HEK293 (cell line): ENCODE measurements at regions of chr16 and their contacts with region 1.

Region 1: GRCh38 chr16:84277237-84277823 is 17.3 kb upstream of the WFDC1 start:
- H3K4me3 ChIP-seq: no peak overlapping the region
- H3K27ac ChIP-seq: no peak overlapping the region
- H3K4me1 ChIP-seq: no peaks in the 10 kb centered on the region
- CTCF ChIP-seq: peak; percentile 62; the same call in 1 of the 2 replicates

Region 2: DNA sequence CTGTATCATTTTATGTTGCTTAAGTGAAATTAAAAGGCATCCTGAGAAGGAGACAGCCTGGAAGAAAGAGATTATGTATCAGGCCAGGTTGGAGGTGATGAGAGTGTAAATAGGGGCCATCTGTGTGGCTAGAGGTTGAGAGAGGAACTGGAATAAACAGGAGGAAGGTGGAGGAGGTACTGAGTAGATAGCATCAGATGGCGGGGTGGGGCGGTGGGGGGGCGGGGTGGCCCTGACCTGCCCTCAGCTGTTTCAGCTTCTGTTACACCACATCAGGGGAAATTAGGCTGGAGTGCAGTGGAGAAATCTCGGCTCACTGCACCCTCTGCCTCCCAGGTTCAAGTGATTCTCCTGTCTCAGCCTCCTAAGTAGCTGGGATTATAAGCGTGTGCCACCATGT is 30.6 kb before region 1 on chr16:
- CTCF ChIA-PET with region 1: interaction called, 11 read pairs
- POLR2A ChIA-PET with region 1: no interaction called
- H3K4me3 ChIP-seq: no peak overlapping the region
- H3K27ac ChIP-seq: no peak overlapping the region
- H3K4me1 ChIP-seq: no peaks in the 10 kb centered on the region
- CTCF ChIP-seq: no peak

Region 3: GRCh38 chr16:84260766-84261554 is 16.4 kb before region 1 on chr16:
- CTCF ChIA-PET with region 1: interaction called, 29 read pairs
- POLR2A ChIA-PET with region 1: no interaction called
- H3K4me3 ChIP-seq: no peak overlapping the region
- H3K27ac ChIP-seq: no peak overlapping the region
- H3K4me1 ChIP-seq: no peaks in the 10 kb centered on the region
- CTCF ChIP-seq: no peak

Region 4: DNA sequence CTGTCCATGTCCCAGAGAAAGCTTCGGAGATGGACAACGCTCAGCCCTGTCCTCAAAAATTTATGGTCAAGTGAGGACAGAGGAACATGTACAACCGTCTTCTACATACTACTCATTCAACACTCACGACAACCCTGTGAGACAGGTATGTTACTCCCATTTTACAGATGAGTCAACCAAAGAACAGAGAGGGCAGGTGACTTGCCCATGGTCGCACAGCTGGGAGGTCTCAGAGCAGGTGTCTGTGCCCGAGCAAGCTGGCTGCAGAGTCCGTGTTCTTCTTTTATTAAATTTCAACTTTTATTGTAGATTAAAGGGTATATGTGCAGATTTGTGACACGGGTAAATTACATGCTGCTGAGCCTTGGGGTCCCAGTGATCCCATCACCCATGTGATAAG is 11.6 kb after region 1 on chr16:
- CTCF ChIA-PET with region 1: interaction called, 10 read pairs
- POLR2A ChIA-PET with region 1: no interaction called
- H3K4me3 ChIP-seq: no peak overlapping the region
- H3K27ac ChIP-seq: no peak overlapping the region
- H3K4me1 ChIP-seq: no peaks in the 10 kb centered on the region
- CTCF ChIP-seq: no peak

Region 5: DNA sequence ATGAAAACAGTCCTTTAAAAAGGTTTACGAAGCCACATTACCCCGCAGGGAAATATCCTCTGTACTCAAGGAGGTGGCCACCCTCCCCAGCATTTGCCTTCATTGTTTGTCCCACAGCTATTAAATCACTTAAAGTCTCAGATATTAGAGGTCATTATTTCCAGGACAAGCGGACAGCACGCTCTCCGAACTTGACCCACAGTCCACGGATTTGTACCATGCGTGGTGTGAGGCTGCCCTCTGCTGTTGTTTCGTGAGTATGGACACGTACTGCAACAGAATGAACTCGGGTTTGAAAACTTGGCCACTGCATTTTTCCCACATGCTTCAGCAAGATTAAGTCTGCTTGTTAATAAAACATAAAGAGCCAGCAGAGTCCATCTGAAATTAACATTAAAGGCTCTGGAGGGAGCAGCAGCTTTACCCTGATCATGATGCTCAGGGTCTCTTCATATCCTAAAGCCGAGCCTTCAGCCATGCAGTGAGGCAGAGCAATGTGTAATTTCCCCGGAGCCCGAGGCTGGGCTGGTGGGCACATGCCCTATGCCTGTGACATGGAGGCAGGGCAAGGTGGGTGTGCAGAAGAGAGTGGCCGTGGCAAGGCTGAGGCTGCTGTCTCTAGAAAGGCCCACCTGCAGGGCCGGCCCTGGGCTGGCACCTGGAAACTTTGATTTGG is 207.4 kb after region 1 on chr16:
- CTCF ChIA-PET with region 1: interaction called, 21 read pairs
- POLR2A ChIA-PET with region 1: no interaction called
- H3K4me3 ChIP-seq: no peak overlapping the region
- H3K27ac ChIP-seq: no peak overlapping the region
- H3K4me1 ChIP-seq: no peaks in the 10 kb centered on the region
- CTCF ChIP-seq: peak; percentile 79